ENCODE measurements at regions of chr19 and their contacts with region 1.

Region 1: DNA sequence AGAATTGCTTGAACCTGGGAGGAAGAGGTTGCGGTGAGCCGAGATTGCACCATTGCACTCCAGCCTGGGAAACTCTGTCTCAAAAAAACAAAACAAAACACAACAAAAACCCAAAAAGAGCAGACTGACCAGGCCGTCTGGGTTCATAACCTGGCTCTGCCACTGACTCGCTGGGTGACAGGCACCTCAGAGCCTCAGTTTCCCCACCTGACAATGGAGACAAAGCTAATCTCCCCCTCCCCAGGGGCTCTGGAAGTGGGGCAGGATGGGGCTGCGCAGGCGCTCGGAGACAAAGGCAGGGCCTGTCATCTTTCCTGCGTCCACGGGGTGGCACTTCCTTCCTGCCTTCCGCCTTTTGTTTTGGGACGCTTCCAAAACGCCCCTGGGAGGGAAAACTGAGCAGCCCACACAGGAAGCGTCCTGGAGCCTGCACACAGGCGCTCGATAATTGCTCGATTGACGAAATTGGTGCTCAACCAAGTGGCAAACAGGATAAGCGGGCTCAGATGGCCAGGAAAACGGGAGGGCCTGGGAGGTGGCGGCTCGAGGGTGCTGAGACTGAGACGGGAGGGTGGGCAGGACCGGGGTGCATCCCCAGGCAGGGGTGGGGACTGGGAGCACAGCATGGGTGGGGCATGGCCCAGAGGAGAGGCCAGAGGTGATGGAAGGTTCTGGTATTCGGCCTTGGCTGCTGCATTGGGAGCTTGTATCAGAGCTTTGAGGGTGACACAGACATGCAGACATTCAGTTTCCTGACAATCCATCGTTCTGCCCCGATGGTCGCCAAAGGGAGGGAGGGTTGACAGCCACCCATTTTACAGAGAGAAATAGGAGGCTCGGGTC is 17.8 kb downstream of the SPC24 start:
- DNase-seq: peak; percentile 60 to 72
- ATAC-seq: peak; percentile 57
- H3K4me3 ChIP-seq: peak overlapping the region; percentile 29 to 53 (median 46)
- H3K27ac ChIP-seq: peak overlapping the region; percentile 72 to 84 (median 79)
- H3K4me1 ChIP-seq: peaks cover 21 to 39% of the 10 kb centered on the region in 2 donors
- H3K27me3 ChIP-seq: no peaks in the 10 kb centered on the region
- CTCF ChIP-seq: peak; percentile 87 to 93 (median 89)
- POLR2A ChIP-seq: no peak

Region 2: GRCh38 chr19:10936661-10937084 is 201.1 kb before region 1 on chr19:
- in situ Hi-C with region 1: loop called in 1 of 4 experiments (anchors 10 kb)
- intact Hi-C with region 1: loop called (anchors 10 kb)
- DNase-seq: no peak
- ATAC-seq: peak; percentile 88 to 92
- H3K4me3 ChIP-seq: no peak overlapping the region
- H3K27ac ChIP-seq: no peak overlapping the region
- H3K4me1 ChIP-seq: peaks cover 0 to 6% of the 10 kb centered on the region in 2 donors
- H3K27me3 ChIP-seq: no peaks in the 10 kb centered on the region
- CTCF ChIP-seq: peak; percentile 42 to 65 (median 60)
- POLR2A ChIP-seq: no peak

Region 3: DNA sequence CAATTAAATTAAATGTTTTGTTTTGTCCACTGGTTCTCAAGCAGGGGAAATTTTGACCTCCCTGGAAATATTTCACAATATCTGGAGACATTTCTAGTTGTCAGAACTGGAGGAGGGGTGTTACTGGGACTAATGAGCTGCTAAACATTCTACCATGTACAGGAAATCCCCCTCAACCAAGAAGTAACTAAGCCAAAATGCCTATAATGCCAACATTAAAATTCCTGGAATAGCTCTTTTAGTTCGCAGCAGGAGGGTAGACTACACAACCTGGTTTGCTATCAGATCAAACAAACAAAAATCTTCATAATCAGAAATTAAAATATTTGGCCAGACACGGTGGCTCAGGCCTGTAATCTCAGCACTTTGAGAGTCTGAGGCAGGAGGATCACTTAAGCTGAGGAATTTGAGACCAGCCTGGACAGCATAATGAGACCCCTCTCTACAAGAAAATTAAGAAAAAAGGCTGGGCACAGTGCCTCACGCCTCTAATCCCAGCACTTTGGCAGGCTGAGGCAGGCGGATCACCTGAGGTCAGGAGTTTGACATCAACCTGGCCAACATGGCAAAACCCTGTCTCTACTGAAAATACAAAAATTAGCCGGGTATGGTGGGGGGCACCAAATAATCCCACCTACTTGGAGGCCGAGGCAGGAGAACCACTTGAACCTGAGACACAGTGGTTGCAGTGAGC is 190.7 kb before region 1 on chr19:
- in situ Hi-C with region 1: loop called in 1 of 4 experiments (anchors 10 kb)
- intact Hi-C with region 1: no loop called
- DNase-seq: no peak
- ATAC-seq: no peak
- H3K4me3 ChIP-seq: no peak overlapping the region
- H3K27ac ChIP-seq: no peak overlapping the region
- H3K4me1 ChIP-seq: no peaks in the 10 kb centered on the region
- H3K27me3 ChIP-seq: no peaks in the 10 kb centered on the region
- CTCF ChIP-seq: no peak
- POLR2A ChIP-seq: no peak

Region 4: DNA sequence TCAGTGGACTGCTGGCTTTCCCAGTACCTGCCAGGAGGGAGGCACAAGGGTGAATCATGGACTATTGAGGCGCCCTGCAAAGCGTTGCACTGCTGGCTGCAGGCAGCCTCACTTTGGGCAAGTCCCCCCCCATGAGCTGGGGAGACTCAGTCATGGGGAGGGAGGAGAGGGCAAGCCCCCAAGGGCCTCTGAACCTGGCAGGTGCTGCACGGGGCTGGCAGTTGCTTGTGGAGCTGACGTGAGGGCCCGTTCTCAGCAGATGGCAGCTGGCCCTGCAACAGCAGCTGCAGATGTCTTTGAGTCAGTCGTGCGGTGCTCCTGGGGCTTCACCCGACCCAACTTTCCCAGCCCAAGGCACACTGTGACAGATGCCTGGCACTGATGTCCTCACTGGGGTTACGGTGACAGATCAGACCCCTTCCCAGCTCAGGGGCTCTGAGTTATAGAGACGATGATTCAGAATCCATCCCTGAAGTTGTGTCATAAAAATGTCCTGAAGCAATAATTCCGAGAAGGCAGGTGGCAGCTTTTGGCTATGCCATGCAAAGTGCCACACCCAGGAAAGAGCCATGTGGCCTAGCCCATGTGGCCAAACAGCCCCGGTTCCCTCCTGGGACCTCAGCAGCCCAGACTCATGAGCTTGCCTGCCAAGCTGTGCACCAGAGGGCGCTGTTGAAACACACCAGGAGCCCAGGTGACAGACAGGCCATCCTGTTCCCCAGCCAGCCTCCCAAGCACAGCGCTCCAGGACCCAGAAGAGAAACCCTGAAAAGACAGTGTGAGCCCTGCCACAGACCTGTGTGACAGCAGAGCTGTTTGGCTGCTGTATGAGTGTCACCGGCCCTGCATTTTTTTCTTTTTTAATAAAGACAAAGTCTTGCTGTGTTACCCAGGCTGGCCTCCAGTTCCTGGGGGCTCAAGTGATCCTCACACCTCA is 102.1 kb before region 1 on chr19:
- in situ Hi-C with region 1: loop called in 1 of 4 experiments (anchors 10 kb)
- intact Hi-C with region 1: no loop called
- DNase-seq: peak; percentile 78 to 92
- ATAC-seq: peak; percentile 85 to 92
- H3K4me3 ChIP-seq: no peak overlapping the region
- H3K27ac ChIP-seq: peak overlapping the region; percentile 64 to 73 (median 72)
- H3K4me1 ChIP-seq: peaks cover 11 to 15% of the 10 kb centered on the region in 2 donors
- H3K27me3 ChIP-seq: no peaks in the 10 kb centered on the region
- CTCF ChIP-seq: peak; percentile 63 to 83 (median 82)
- POLR2A ChIP-seq: no peak

Region 5: DNA sequence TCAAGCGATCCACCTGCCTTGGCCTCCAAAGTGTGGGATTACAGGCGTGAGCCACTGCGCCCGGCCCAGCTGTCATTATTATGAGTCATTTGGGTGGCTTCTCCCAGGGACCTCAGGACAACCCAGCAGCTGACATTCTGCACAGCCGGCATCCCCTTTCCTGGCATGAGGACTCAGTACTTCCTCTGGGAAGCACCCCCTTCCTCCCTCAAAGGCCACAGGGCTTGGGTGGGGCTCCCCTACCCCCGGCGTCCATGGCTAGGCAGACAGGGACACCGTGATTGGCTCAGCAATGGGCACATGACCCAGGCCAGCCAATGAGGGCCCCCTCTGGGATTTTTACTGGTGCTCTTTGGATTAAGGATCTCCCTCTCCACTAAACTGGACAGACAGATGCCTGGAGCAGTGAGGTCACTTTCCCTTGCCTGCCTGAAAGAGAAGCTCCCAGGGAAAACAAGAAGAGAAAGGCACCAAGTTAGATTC is 53.6 kb after region 1 on chr19:
- in situ Hi-C with region 1: no loop called
- intact Hi-C with region 1: loop called (anchors 2 kb)
- DNase-seq: peak; percentile 68 to 92
- ATAC-seq: peak; percentile 79 to 88
- H3K4me3 ChIP-seq: no peak overlapping the region
- H3K27ac ChIP-seq: peak overlapping the region; percentile 69 to 92 (median 76)
- H3K4me1 ChIP-seq: peaks cover 17 to 42% of the 10 kb centered on the region in 2 donors
- H3K27me3 ChIP-seq: no peaks in the 10 kb centered on the region
- CTCF ChIP-seq: no peak
- POLR2A ChIP-seq: peak in 1 of 2 donors; percentile 29

Region 6: GRCh38 chr19:11203194-11204075 is 65.7 kb after region 1 on chr19:
- in situ Hi-C with region 1: loop called (anchors 5 kb)
- intact Hi-C with region 1: loop called (anchors 1 kb)
- DNase-seq: peak in 1 of 2 donors; percentile 51
- ATAC-seq: peak; percentile 43 to 76
- H3K4me3 ChIP-seq: peak overlapping the region; percentile 8 to 37 (median 30)
- H3K27ac ChIP-seq: peak overlapping the region; percentile 69 to 75 (median 74)
- H3K4me1 ChIP-seq: peaks cover 9 to 14% of the 10 kb centered on the region in 2 donors
- H3K27me3 ChIP-seq: no peaks in the 10 kb centered on the region
- CTCF ChIP-seq: peak; percentile 67 to 95 (median 85)
- POLR2A ChIP-seq: no peak

Region 7: GRCh38 chr19:11587302-11587974 is 449.7 kb after region 1 on chr19:
- in situ Hi-C with region 1: no loop called
- intact Hi-C with region 1: loop called (anchors 10 kb)
- DNase-seq: peak; percentile 41 to 56
- ATAC-seq: peak; percentile 54 to 68
- H3K4me3 ChIP-seq: no peak overlapping the region
- H3K27ac ChIP-seq: no peak overlapping the region
- H3K4me1 ChIP-seq: peaks cover 0 to 5% of the 10 kb centered on the region in 2 donors
- H3K27me3 ChIP-seq: no peaks in the 10 kb centered on the region
- CTCF ChIP-seq: peak; percentile 78 to 88 (median 83)
- POLR2A ChIP-seq: no peak